Activated naive CD4-positive, alpha-beta T cell treated with anti-CD3 and anti-CD28 coated beads for 36 hours (primary cell): ENCODE measurements at regions of chr19 and their contacts with region 1.

Region 1: GRCh38 chr19:10835754-10836477 is at the start of gene TMED1:
- DNase-seq: peak; percentile 98
- H3K4me3 Mint-ChIP-seq: peak within 1 kb of the TSS; percentile 94
- H3K27ac Mint-ChIP-seq: peak within 1 kb of the TSS; percentile 97
- H3K4me1 Mint-ChIP-seq: peaks cover 14% of the 10 kb centered on the region
- H3K27me3 Mint-ChIP-seq: no peaks in the 10 kb centered on the region
- total RNA-seq, gene TMED1: 15.3 to 16.7 TPM

Region 2: GRCh38 chr19:10602330-10603083 is 233.4 kb before region 1 on chr19:
- CTCF ChIA-PET with region 1: no interaction called
- intact Hi-C with region 1: loop called (anchors 2 kb)
- DNase-seq: peak; percentile 91
- H3K4me3 Mint-ChIP-seq: peak overlapping the region; percentile 98
- H3K27ac Mint-ChIP-seq: peak overlapping the region; percentile 100
- H3K4me1 Mint-ChIP-seq: peaks cover 24% of the 10 kb centered on the region
- H3K27me3 Mint-ChIP-seq: no peaks in the 10 kb centered on the region

Region 3: DNA sequence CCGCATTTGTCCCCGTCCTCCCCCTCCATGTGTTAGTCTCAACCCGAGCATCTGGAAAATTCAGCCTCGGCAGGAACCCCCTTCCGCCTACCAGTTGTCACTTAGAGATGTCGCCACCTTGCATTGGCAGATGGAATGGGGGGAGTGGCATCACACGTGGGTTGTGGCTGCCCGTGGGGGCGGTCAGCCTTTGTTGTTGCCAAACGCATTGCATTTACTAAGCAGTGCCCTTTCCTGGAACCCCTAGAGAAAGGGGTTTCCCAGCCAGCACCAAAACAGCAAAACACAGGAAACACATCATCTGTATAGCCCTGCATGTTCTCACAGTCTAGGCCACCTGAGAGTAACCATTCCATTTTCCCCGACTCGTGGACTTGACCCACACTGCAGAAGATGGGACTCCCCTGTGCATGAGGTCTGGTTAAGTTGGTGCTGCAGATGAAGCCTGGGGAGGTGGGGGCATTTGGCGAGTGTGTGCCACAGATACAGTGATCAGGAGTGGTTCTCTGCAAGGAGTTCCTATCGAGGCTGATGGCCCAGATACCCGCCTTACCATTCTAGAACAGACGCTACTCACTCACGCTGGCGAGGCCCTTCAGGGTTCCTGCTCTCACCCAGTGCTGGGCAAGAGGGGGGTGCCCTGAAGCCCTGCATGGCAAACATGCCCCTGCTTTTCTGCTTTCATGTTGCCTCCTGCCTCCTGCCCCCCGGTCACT is 38.2 kb before region 1 on chr19:
- CTCF ChIA-PET with region 1: no interaction called
- intact Hi-C with region 1: loop called (anchors 1 kb)
- DNase-seq: peak; percentile 96
- H3K4me3 Mint-ChIP-seq: peak overlapping the region; percentile 70
- H3K27ac Mint-ChIP-seq: peak overlapping the region; percentile 96
- H3K4me1 Mint-ChIP-seq: peaks cover 28% of the 10 kb centered on the region
- H3K27me3 Mint-ChIP-seq: no peaks in the 10 kb centered on the region

Region 4: DNA sequence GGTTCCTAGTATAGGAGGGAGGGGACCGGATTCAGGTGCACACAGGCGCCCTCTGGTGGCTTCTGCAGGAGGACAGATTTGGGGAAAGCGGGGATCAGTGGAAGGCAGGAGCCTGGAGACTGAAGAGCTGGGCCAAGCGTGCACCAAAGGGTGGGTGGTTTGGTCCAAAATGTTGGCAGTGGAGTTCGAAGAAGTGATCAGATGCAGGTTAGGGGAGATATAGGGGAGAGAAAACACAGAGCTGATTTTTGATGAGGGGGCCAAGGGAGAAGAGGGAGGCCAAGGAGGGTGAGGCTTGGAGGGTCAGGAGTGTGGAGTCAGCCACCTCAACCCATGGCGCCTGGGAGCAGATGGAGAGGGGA is 28.6 kb after region 1 on chr19:
- CTCF ChIA-PET with region 1: interaction called, 16 read pairs
- intact Hi-C with region 1: loop called (anchors 1 kb)
- DNase-seq: peak; percentile 94
- H3K4me3 Mint-ChIP-seq: no peak overlapping the region
- H3K27ac Mint-ChIP-seq: no peak overlapping the region
- H3K4me1 Mint-ChIP-seq: peaks cover 15% of the 10 kb centered on the region
- H3K27me3 Mint-ChIP-seq: no peaks in the 10 kb centered on the region

Region 5: DNA sequence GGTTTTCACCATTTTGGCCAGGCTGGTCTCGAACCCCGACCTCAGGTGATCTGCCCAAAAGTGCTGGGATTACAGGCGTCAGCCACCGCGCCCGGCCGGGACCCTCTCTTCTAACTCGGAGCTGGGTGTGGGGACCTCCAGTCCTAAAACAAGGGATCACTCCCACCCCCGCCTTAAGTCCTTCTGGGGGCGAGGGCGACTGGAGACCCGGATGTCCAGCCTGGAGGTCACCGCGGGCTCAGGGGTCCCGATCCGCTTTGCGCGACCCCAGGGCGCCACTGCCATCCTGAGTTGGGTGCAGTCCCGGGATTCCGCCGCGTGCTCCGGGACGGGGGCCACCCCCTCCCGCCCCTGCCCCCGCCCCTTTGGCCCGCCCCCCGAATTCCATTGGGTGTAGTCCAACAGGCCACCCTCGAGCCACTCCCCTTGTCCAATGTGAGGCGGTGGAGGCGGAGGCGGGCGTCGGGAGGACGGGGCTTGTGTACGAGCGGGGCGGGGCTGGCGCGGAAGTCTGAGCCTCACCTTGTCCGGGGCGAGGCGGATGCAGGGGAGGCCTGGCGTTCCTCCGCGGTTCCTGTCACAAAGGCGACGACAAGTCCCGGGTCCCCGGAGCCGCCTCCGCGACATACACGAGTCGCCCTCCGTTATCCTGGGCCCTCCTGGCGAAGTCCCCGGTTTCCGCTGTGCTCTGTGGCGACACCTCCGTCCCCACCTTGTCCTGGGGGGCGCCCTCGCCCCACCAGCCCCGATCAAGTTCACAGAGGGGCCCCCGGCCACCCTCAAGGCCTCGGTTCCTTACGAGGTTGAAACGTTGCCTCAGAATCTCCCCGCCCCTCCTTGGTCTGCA is 254.4 kb after region 1 on chr19:
- CTCF ChIA-PET with region 1: no interaction called
- intact Hi-C with region 1: loop called (anchors 1 kb)
- DNase-seq: peak; percentile 99
- H3K4me3 Mint-ChIP-seq: peak overlapping the region; percentile 94
- H3K27ac Mint-ChIP-seq: peak overlapping the region; percentile 99
- H3K4me1 Mint-ChIP-seq: peaks cover 48% of the 10 kb centered on the region
- H3K27me3 Mint-ChIP-seq: no peaks in the 10 kb centered on the region